Endothelial cell of umbilical vein (primary cell): ENCODE measurements at regions of chr20 and their contacts with region 1.

Region 1: DNA sequence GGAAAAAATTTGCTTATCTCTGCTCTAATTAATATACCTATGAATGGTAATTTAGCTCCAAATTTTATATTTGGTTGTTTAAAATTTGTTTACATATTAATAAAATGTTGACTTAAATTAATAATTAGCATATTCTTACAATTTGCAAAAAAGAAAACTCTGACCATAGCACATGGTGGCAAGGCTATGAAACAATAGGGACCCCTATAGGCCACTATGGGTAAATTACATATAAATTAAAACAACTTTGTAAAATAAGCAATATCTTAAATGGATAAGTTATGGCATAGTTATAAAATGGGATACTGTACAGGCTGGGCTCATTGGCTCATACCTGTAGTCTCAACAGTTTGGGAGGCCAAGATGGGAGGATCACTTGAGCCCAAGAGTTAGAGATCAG is 76.0 kb downstream of the MKKS start:
- DNase-seq: peak; percentile 37
- H3K4me3 ChIP-seq: no peak overlapping the region
- H3K27ac ChIP-seq: peak overlapping the region; percentile 45
- H3K4me1 ChIP-seq: peaks cover 44% of the 10 kb centered on the region
- H3K27me3 ChIP-seq: no peaks in the 10 kb centered on the region
- CTCF ChIP-seq: peak; percentile 13 to 25
- POLR2A ChIP-seq: no peak

Region 2: GRCh38 chr20:10171864-10172751 is 185.9 kb before region 1 on chr20:
- CTCF ChIA-PET with region 1: no interaction called
- POLR2A ChIA-PET with region 1: no interaction called
- dilution Hi-C with region 1: no loop called
- intact Hi-C with region 1: loop called (anchors 2 kb)
- DNase-seq: peak; percentile 37
- H3K4me3 ChIP-seq: peak overlapping the region; percentile 34 to 68 (median 66)
- H3K27ac ChIP-seq: no peak overlapping the region
- H3K4me1 ChIP-seq: peaks cover 7% of the 10 kb centered on the region
- H3K27me3 ChIP-seq: peaks cover 10 to 14% of the 10 kb centered on the region in 2 experiments
- CTCF ChIP-seq: no peak
- POLR2A ChIP-seq: no peak

Region 3: GRCh38 chr20:10249048-10249770 is 108.8 kb before region 1 on chr20:
- CTCF ChIA-PET with region 1: no interaction called
- POLR2A ChIA-PET with region 1: no interaction called
- dilution Hi-C with region 1: no loop called
- intact Hi-C with region 1: no loop called
- DNase-seq: no peak
- H3K4me3 ChIP-seq: no peak overlapping the region
- H3K27ac ChIP-seq: no peak overlapping the region
- H3K4me1 ChIP-seq: no peaks in the 10 kb centered on the region
- H3K27me3 ChIP-seq: peaks cover 0 to 2% of the 10 kb centered on the region in 2 experiments
- CTCF ChIP-seq: no peak
- POLR2A ChIP-seq: no peak

Region 4: GRCh38 chr20:10316582-10316981 is 41.4 kb before region 1 on chr20:
- CTCF ChIA-PET with region 1: interaction called, 16 read pairs
- POLR2A ChIA-PET with region 1: no interaction called
- dilution Hi-C with region 1: no loop called
- intact Hi-C with region 1: no loop called
- DNase-seq: peak; percentile 35
- H3K4me3 ChIP-seq: no peak overlapping the region
- H3K27ac ChIP-seq: no peak overlapping the region
- H3K4me1 ChIP-seq: no peaks in the 10 kb centered on the region
- H3K27me3 ChIP-seq: no peaks in the 10 kb centered on the region
- CTCF ChIP-seq: peak; percentile 14 to 37
- POLR2A ChIP-seq: no peak

Region 5: GRCh38 chr20:10376270-10377075 is 18.5 kb after region 1 on chr20:
- CTCF ChIA-PET with region 1: interaction called, 4 read pairs
- POLR2A ChIA-PET with region 1: interaction called, 5 read pairs
- dilution Hi-C with region 1: no loop called
- intact Hi-C with region 1: loop called (anchors 1 kb)
- DNase-seq: peak; percentile 84
- H3K4me3 ChIP-seq: no peak overlapping the region
- H3K27ac ChIP-seq: peak overlapping the region; percentile 74
- H3K4me1 ChIP-seq: peaks cover 17% of the 10 kb centered on the region
- H3K27me3 ChIP-seq: no peaks in the 10 kb centered on the region
- CTCF ChIP-seq: no peak
- POLR2A ChIP-seq: peak; percentile 26

Region 6: DNA sequence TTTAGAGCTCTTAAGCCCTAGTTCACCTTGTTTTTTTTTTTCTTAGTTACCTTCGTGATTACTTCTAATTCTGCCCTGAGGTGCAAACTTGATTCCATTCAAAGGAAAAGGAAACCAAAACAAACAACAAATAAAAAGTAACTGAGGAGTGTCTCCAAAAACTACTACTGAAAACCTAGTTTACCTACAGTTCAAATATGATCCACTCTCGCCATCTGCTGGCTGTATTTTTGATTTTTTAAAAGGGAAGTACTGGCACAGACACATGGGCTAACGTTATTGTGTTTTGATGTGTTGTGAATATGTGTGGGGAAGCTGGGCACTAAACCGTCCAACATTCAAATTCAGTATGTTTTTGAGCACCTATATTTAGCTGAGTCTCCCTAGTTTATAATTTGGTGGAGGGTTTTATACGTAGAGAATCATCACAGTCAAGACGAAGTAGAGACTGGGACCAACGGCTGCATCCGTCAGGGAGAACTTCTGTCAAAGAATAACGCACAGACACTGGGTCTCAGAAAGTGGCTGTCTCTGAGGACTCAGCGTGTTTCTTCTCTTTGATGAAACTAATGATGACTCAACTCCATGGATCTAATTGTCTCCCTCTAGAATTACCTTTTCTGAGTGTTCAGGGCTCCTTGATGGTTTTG is 1186.2 kb after region 1 on chr20:
- CTCF ChIA-PET with region 1: interaction called, 5 read pairs
- POLR2A ChIA-PET with region 1: no interaction called
- dilution Hi-C with region 1: no loop called
- intact Hi-C with region 1: loop called (anchors 10 kb)
- DNase-seq: peak; percentile 74
- H3K4me3 ChIP-seq: no peak overlapping the region
- H3K27ac ChIP-seq: no peak overlapping the region
- H3K4me1 ChIP-seq: peaks cover 9% of the 10 kb centered on the region
- H3K27me3 ChIP-seq: no peaks in the 10 kb centered on the region
- CTCF ChIP-seq: peak; percentile 16 to 44
- POLR2A ChIP-seq: no peak